Naive thymus-derived CD4-positive, alpha-beta T cell (primary cell): ENCODE measurements at regions of chr10 and their contacts with region 1.

Region 1: GRCh38 chr10:26448706-26449435 is 10.7 kb downstream of the APBB1IP start:
- DNase-seq: peak; percentile 23 to 91 (median 89)
- ATAC-seq: peak; percentile 89
- H3K4me3 ChIP-seq: peak overlapping the region; percentile 31
- H3K4me3 Mint-ChIP-seq: peak overlapping the region; percentile 71 to 92 (median 84)
- H3K27ac ChIP-seq: peak overlapping the region; percentile 76
- H3K27ac Mint-ChIP-seq: peak overlapping the region; percentile 93 to 99 (median 97)
- H3K4me1 ChIP-seq: peaks cover 57 to 70% of the 10 kb centered on the region in 2 donors
- H3K4me1 Mint-ChIP-seq: peaks cover 60 to 97% (median 90%) of the 10 kb centered on the region in 7 donors
- H3K27me3 ChIP-seq: no peaks in the 10 kb centered on the region
- H3K27me3 Mint-ChIP-seq: no peaks in the 10 kb centered on the region

Region 2: GRCh38 chr10:26157734-26158133 is 291.1 kb before region 1 on chr10:
- CTCF ChIA-PET with region 1: no interaction called
- POLR2A ChIA-PET with region 1: no interaction called
- intact Hi-C with region 1: no loop called
- DNase-seq: no peak
- ATAC-seq: no peak
- H3K4me3 ChIP-seq: no peak overlapping the region
- H3K4me3 Mint-ChIP-seq: no peak overlapping the region
- H3K27ac ChIP-seq: no peak overlapping the region
- H3K27ac Mint-ChIP-seq: no peak overlapping the region
- H3K4me1 ChIP-seq: no peaks in the 10 kb centered on the region
- H3K4me1 Mint-ChIP-seq: no peaks in the 10 kb centered on the region
- H3K27me3 ChIP-seq: no peaks in the 10 kb centered on the region
- H3K27me3 Mint-ChIP-seq: peaks cover 0 to 26% (median 15%) of the 10 kb centered on the region in 5 donors

Region 3: GRCh38 chr10:26430641-26431164 is 18.2 kb before region 1 on chr10:
- CTCF ChIA-PET with region 1: interaction called, 3 read pairs
- POLR2A ChIA-PET with region 1: interaction called, 6 read pairs
- intact Hi-C with region 1: loop called in 1 of 2 experiments (anchors 1 kb)
- DNase-seq: no peak
- ATAC-seq: peak; percentile 93
- H3K4me3 ChIP-seq: no peak overlapping the region
- H3K4me3 Mint-ChIP-seq: peak overlapping the region in 8 of 10 donors; percentile 18 to 61 (median 53)
- H3K27ac ChIP-seq: no peak overlapping the region
- H3K27ac Mint-ChIP-seq: peak overlapping the region in 4 of 9 donors; percentile 23 to 89 (median 37)
- H3K4me1 ChIP-seq: peaks cover 0 to 9% of the 10 kb centered on the region in 2 donors
- H3K4me1 Mint-ChIP-seq: peaks cover 13 to 35% (median 21%) of the 10 kb centered on the region in 7 donors
- H3K27me3 ChIP-seq: no peaks in the 10 kb centered on the region
- H3K27me3 Mint-ChIP-seq: no peaks in the 10 kb centered on the region

Region 4: DNA sequence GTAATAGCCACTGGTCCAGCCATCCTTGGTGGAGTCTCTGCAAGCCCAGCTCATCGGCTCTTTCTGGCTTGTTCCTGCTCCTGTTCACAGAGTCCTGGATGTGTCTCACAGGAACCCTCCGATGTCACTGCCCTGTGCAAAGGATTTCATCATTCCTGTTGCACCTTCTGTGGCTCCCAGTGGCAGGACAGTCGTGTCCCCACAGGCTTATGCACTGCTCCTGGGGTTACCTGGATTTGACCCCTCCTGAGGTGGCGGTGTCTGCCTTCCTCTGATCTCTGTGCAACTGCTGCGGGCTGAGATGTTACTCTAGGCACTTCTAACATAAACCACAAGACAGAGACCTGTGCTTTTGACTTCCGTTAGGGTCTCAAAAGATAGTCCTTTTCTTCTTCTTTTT is 19.8 kb after region 1 on chr10:
- CTCF ChIA-PET with region 1: interaction called, 3 read pairs
- POLR2A ChIA-PET with region 1: interaction called, 9 read pairs
- intact Hi-C with region 1: loop called (anchors 1 kb)
- DNase-seq: peak in 8 of 9 donors; percentile 20 to 82 (median 76)
- ATAC-seq: peak; percentile 94
- H3K4me3 ChIP-seq: peak overlapping the region; percentile 1
- H3K4me3 Mint-ChIP-seq: peak overlapping the region; percentile 66 to 93 (median 84)
- H3K27ac ChIP-seq: peak overlapping the region; percentile 33
- H3K27ac Mint-ChIP-seq: peak overlapping the region; percentile 83 to 96 (median 91)
- H3K4me1 ChIP-seq: peaks cover 64 to 76% of the 10 kb centered on the region in 2 donors
- H3K4me1 Mint-ChIP-seq: peaks cover 61 to 100% (median 92%) of the 10 kb centered on the region in 7 donors
- H3K27me3 ChIP-seq: no peaks in the 10 kb centered on the region
- H3K27me3 Mint-ChIP-seq: no peaks in the 10 kb centered on the region

Region 5: DNA sequence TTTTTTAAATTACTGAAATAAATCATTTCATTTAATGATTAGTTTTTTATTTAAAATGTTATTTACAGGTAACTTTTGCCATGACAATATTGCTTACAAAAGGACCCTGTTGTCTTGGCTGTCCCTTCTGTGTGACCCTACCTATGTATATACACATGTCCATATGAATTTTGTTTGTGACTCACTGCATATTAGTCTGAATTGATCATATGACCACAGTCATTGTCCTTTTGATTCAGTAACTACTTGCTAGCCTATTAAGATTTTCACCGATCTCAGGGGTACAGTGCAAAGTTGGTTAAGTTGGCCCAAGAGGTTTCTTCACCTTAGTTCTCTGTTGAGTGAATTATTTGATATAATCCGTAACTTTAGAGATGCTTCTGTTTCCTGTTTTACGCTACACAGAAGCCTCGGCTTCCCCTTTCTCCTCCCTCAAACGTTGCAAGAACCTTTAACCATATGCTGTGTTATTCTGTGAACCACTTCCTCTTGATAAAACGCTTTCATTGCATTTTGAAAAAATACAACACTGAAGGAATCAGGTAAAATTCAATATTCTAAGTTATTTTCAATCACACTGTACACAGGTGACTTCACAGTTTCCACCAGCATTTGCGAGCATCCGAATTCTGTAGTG is 33.2 kb after region 1 on chr10:
- CTCF ChIA-PET with region 1: interaction called, 8 read pairs
- POLR2A ChIA-PET with region 1: interaction called, 12 read pairs
- intact Hi-C with region 1: loop called (anchors 1 kb)
- DNase-seq: peak in 7 of 9 donors; percentile 65 to 90 (median 84)
- ATAC-seq: peak; percentile 91
- H3K4me3 ChIP-seq: peak overlapping the region; percentile 46
- H3K4me3 Mint-ChIP-seq: peak overlapping the region; percentile 68 to 88 (median 76)
- H3K27ac ChIP-seq: peak overlapping the region; percentile 71
- H3K27ac Mint-ChIP-seq: peak overlapping the region; percentile 85 to 97 (median 95)
- H3K4me1 ChIP-seq: peaks cover 81 to 85% of the 10 kb centered on the region in 2 donors
- H3K4me1 Mint-ChIP-seq: peaks cover 60 to 85% (median 79%) of the 10 kb centered on the region in 7 donors
- H3K27me3 ChIP-seq: no peaks in the 10 kb centered on the region
- H3K27me3 Mint-ChIP-seq: no peaks in the 10 kb centered on the region

Region 6: DNA sequence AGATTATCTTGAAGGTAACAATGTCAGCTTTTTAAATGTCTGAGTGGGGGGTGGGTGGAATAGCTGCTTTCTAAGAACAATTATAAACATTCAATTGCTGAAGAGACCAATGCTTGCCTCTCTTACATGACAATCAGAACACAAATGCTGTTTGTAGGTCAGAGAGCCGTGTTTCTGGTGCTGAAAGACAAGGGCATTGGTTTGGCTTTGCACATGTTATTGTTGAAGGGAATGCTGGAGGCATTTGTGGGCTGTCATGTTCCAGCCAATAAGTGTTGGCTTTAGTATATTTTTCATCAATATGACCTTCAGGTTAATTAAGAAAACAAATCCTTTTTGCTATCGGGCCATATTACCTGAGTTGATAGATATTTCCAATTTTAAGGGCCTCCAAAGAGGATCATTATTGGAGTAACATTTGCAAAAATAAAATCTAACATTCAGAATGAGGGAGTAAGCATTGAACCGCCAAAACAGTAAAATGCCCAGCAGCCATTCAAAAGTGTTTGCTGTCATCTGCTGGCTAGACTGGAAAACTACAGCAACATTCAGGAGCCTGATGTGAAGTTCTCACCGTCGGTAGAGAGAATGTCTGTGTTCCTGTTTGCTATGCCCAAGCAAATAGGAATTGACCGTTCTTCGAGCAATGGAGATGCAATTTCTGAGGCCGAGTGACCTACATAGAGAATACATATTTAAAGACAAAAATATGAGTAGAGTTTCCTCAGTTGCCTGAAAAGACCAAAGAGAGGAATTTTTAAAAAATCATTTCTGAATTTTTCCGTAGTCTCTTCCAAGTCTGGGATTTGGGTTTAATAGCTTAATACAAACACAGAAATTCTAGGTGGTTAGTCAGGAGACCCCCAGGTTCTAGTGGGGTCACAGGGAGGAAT is 108.1 kb after region 1 on chr10:
- CTCF ChIA-PET with region 1: interaction called, 3 read pairs
- POLR2A ChIA-PET with region 1: no interaction called
- intact Hi-C with region 1: loop called in 1 of 2 experiments (anchors 1 kb)
- DNase-seq: peak in 7 of 9 donors; percentile 15 to 62 (median 57)
- ATAC-seq: peak; percentile 70
- H3K4me3 ChIP-seq: no peak overlapping the region
- H3K4me3 Mint-ChIP-seq: no peak overlapping the region
- H3K27ac ChIP-seq: peak overlapping the region; percentile 24
- H3K27ac Mint-ChIP-seq: peak overlapping the region; percentile 25 to 91 (median 63)
- H3K4me1 ChIP-seq: no peaks in the 10 kb centered on the region
- H3K4me1 Mint-ChIP-seq: peaks cover 11 to 38% (median 29%) of the 10 kb centered on the region in 7 donors
- H3K27me3 ChIP-seq: no peaks in the 10 kb centered on the region
- H3K27me3 Mint-ChIP-seq: no peaks in the 10 kb centered on the region